ENCODE measurements at regions of chr2 and their contacts with region 1.

Region 1: GRCh38 chr2:10408649-10409579 is 39.2 kb downstream of the ODC1 start:
- DNase-seq: peak; percentile 89
- ATAC-seq: peak; percentile 79
- H3K4me3 Mint-ChIP-seq: peak overlapping the region; percentile 43
- H3K27ac Mint-ChIP-seq: peak overlapping the region; percentile 85
- H3K4me1 Mint-ChIP-seq: peaks cover 36% of the 10 kb centered on the region
- H3K27me3 Mint-ChIP-seq: no peaks in the 10 kb centered on the region

Region 2: GRCh38 chr2:10122386-10123280 is 286.3 kb before region 1 on chr2 and contains the start of gene RRM2:
- CTCF ChIA-PET with region 1: interaction called, 69 read pairs
- DNase-seq: peak; percentile 98
- ATAC-seq: peak; percentile 80
- H3K4me3 Mint-ChIP-seq: peak within 1 kb of the TSS; percentile 97
- H3K27ac Mint-ChIP-seq: peak within 1 kb of the TSS; percentile 99
- H3K4me1 Mint-ChIP-seq: peaks cover 55% of the 10 kb centered on the region
- H3K27me3 Mint-ChIP-seq: no peaks in the 10 kb centered on the region
- total RNA-seq, gene RRM2: 506 to 648 TPM

Region 3: GRCh38 chr2:10141736-10142642 is 266.9 kb before region 1 on chr2:
- CTCF ChIA-PET with region 1: interaction called, 36 read pairs
- DNase-seq: no peak
- ATAC-seq: peak; percentile 52
- H3K4me3 Mint-ChIP-seq: no peak overlapping the region
- H3K27ac Mint-ChIP-seq: peak overlapping the region; percentile 46
- H3K4me1 Mint-ChIP-seq: peaks cover 28% of the 10 kb centered on the region
- H3K27me3 Mint-ChIP-seq: no peaks in the 10 kb centered on the region

Region 4: DNA sequence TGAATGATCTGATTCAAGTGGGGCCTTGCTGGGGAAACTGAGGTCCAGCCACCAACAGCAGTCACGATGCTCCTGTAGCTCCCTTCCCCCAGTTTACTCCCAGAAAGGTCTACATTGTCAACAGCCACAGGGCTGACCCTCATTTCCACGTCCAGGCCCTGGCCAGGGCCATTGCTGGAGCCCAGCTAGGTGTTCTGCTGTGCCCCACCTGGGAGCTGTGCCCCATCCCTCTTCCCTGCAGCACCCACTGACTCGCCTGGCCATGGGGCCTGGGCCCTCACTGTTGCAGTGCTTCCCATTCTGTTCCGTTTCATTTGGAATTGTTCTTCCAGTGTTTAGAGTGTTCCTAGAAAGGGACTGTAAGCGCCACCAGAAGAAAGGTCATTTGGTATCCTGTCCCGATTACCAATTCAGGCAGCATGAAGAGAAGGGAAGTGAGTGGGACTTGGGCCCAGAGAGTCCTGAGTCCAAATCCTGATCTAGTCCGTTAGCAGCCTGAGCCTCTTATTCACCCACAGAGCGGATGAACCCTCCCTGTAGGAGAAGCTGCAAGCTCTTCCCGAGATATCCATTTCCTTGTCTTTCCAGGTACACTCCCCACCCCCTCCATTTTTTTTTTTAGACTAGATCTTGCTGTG is 179.3 kb before region 1 on chr2:
- CTCF ChIA-PET with region 1: interaction called, 12 read pairs
- DNase-seq: no peak
- ATAC-seq: no peak
- H3K4me3 Mint-ChIP-seq: no peak overlapping the region
- H3K27ac Mint-ChIP-seq: no peak overlapping the region
- H3K4me1 Mint-ChIP-seq: no peaks in the 10 kb centered on the region
- H3K27me3 Mint-ChIP-seq: peaks cover 3% of the 10 kb centered on the region

Region 5: DNA sequence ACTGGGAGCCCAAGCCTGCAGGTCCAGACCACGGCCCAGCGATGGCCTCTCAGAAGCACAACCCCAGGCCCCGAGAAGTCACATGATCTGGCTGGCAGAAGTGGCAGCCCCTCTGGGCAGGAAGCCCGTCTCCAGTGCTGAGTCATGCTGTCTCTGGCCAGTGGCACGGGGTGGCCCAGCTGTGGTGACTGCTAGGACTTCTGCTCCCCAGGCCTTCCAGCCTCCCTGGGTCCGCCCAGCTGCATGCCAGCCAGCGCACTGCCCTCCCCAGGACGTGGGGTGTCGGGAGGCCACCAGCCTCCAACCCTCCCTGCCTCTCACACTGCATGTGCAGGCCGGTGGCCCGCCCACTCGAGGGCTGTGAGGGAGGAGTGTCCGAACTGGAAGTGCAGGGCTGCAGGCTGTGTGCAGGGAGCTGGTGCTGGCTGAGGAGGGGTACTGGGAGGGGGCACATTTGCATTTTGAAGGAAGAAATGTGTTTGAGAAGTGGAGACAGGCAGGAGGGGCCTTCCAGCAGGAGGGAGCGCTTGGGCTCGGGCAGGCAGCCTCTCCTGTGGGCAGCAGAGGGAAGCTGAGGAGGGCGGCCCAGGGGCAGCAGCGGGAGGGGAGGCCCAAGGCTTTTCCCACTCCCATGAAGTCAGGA is 123.2 kb before region 1 on chr2:
- CTCF ChIA-PET with region 1: interaction called, 15 read pairs
- DNase-seq: no peak
- ATAC-seq: peak; percentile 10
- H3K4me3 Mint-ChIP-seq: no peak overlapping the region
- H3K27ac Mint-ChIP-seq: no peak overlapping the region
- H3K4me1 Mint-ChIP-seq: peaks cover 20% of the 10 kb centered on the region
- H3K27me3 Mint-ChIP-seq: no peaks in the 10 kb centered on the region

Region 6: GRCh38 chr2:10382354-10383061 is 26.4 kb before region 1 on chr2:
- CTCF ChIA-PET with region 1: interaction called, 59 read pairs
- DNase-seq: peak; percentile 70
- ATAC-seq: peak; percentile 79
- H3K4me3 Mint-ChIP-seq: peak overlapping the region; percentile 38
- H3K27ac Mint-ChIP-seq: peak overlapping the region; percentile 72
- H3K4me1 Mint-ChIP-seq: peaks cover 73% of the 10 kb centered on the region
- H3K27me3 Mint-ChIP-seq: no peaks in the 10 kb centered on the region

Region 7: DNA sequence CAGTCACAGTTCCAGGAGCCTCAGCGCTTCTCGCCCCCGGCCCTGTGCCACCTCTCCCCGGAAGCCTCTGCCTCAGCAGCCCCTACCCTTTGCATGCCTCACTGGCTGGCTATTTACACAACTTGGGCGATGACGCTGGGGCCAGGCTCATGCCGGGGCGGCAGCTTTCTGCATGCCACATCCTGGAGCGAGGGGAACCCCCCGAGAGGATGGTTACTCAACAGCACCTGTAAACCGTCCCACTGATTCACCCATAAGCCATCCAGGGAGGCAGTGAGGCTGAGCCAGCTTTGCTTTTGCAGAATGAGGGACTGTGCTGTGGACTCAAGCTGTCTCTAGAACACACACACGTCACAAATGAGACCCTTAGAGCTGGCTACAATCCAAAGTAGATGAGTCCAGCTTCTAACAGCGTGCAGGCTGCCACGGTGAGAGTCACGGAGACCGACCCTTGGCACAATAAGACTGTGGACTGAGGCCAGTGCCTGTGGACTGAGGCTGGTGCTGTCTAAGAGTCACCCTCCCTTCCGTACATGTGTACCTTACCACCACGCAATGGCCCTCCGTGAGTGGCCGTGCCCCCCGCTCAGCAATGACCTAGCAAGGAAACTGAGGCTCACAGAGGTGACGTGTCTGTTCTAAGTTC is 84.8 kb after region 1 on chr2:
- CTCF ChIA-PET with region 1: no interaction called
- DNase-seq: peak; percentile 93
- ATAC-seq: peak; percentile 98
- H3K4me3 Mint-ChIP-seq: no peak overlapping the region
- H3K27ac Mint-ChIP-seq: peak overlapping the region; percentile 43
- H3K4me1 Mint-ChIP-seq: peaks cover 23% of the 10 kb centered on the region
- H3K27me3 Mint-ChIP-seq: peaks cover 42% of the 10 kb centered on the region

Region 8: DNA sequence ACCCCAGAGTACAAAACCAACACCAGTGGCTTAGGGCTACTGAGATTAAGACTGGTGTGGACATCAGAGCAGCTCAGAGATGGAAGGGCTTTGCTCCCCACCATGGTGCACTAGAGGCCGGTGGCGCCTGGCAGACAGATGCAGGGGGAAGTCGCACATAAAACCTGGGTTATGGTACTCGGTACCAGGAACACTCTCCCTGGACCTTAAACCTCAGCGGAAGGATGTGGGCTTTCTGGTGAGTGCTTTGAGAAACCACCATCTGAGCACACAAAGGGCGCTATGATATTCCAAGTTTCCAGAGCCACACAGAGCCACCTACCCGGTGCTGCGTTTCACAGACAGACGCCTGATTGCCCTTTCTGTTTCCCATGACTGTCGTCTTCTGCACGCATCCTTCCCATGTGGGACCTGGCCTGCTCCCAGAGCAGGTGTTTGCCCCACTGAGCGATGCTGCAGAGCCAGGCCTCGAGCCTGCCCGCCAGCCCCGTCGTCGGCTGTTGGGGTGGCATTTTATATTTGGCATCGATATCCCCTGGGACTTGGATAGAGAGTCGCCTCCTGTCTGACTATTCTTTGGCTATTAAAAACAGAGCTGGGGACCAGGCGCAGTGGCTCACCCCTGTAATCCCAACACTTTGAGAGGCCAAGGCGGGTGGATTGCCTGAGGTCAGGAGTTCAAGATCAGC is 128.8 kb after region 1 on chr2:
- CTCF ChIA-PET with region 1: no interaction called
- DNase-seq: peak; percentile 69
- ATAC-seq: peak; percentile 60
- H3K4me3 Mint-ChIP-seq: no peak overlapping the region
- H3K27ac Mint-ChIP-seq: no peak overlapping the region
- H3K4me1 Mint-ChIP-seq: peaks cover 27% of the 10 kb centered on the region
- H3K27me3 Mint-ChIP-seq: peaks cover 29% of the 10 kb centered on the region

Region 9: GRCh38 chr2:10629819-10630532 is 221.1 kb after region 1 on chr2:
- CTCF ChIA-PET with region 1: no interaction called
- DNase-seq: no peak
- ATAC-seq: no peak
- H3K4me3 Mint-ChIP-seq: no peak overlapping the region
- H3K27ac Mint-ChIP-seq: no peak overlapping the region
- H3K4me1 Mint-ChIP-seq: peaks cover 2% of the 10 kb centered on the region
- H3K27me3 Mint-ChIP-seq: no peaks in the 10 kb centered on the region

Region 10: GRCh38 chr2:10659898-10660568 is 251.1 kb after region 1 on chr2:
- CTCF ChIA-PET with region 1: interaction called, 12 read pairs
- DNase-seq: peak; percentile 72
- ATAC-seq: peak; percentile 83
- H3K4me3 Mint-ChIP-seq: no peak overlapping the region
- H3K27ac Mint-ChIP-seq: no peak overlapping the region
- H3K4me1 Mint-ChIP-seq: peaks cover 20% of the 10 kb centered on the region
- H3K27me3 Mint-ChIP-seq: no peaks in the 10 kb centered on the region

Region 11: DNA sequence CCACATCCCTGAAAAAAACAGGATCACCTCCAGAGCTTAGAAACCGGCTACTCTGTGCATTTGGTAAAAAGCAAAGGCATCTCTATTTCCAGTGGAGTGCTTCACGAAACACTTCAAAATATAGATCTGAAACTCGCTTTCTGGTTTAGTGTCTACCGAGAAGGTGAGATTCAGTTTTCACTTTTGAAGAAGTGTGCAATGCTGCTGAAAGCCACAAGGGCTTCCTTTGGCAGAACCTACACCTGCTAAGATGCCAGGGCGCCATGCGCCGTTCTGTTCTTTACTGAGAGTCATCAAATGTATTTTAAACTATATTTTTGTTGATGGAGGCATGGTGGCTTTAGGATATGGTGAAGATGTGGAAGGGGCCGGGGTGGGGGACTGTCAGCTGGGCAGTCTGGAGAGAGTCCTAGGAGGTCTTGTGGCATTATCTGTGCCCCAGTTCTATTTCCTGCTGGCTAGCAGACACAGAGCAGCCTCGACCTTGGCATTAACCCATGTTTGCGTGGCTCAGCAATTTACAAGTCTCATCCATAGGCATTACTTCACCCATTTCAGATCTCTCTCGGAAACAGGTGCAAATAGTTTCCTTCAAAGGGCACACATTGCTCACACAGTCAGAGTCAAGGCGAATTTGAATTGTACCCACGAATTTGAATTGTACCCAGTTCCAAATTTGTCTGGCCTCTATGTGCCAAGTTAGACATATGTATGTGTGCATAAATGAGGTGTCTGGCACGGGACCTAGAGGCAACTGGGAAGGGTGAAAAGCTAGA is 456.1 kb after region 1 on chr2:
- CTCF ChIA-PET with region 1: no interaction called
- DNase-seq: peak; percentile 51
- ATAC-seq: peak; percentile 90
- H3K4me3 Mint-ChIP-seq: no peak overlapping the region
- H3K27ac Mint-ChIP-seq: no peak overlapping the region
- H3K4me1 Mint-ChIP-seq: peaks cover 36% of the 10 kb centered on the region
- H3K27me3 Mint-ChIP-seq: peaks cover 77% of the 10 kb centered on the region